ENCODE measurements at regions of chr1 and their contacts with region 1.

Region 1: DNA sequence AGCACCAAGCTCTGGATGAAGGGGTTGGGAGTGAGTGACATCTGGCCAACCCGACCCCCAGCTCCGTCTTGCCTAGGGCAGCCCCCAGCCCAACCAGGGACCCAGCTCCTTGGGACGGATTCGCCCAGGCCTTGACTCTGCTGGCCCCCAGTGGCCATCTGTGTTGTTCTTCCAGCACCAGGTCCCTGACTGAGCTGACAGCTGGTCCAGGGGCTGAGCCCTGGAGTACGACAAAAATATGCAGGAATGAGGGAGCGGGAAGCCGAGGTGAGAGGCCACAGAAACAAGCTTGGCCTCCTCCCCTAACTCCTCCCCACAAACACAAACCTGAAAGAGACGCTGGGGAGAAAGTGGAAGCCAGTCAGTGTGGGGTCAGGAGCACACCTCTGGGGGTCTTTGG is 55.0 kb upstream of the PAX7 start:
- DNase-seq: peak; percentile 94
- ATAC-seq: peak; percentile 95
- H3K4me3 Mint-ChIP-seq: no peak overlapping the region
- H3K27ac Mint-ChIP-seq: no peak overlapping the region
- H3K4me1 Mint-ChIP-seq: peaks cover 9% of the 10 kb centered on the region
- H3K27me3 Mint-ChIP-seq: peaks cover 2% of the 10 kb centered on the region; the same call in 1 of the 2 replicates
- CTCF ChIP-seq: peak; percentile 77

Region 2: DNA sequence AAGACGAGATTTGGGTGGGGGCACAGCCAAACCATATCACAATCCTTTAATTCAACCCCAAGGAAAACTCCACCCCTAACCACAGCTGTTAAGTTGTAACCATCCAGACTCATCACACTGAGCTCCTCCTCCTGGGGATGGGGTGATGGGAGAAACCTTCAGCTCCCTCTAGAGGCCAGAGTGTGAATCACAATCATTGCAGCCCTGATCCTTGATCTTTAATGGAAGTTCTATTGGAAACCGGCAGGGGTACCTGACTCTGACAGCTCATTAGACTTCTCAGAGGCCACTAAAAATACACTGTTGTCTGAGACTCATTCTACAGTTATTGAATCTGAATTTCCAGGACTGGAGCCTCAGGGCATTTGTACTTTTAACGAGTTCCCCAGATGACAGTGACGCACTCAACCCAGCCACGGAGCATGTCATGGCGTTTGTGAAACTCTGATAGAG is 340.8 kb before region 1 on chr1:
- CTCF ChIA-PET with region 1: interaction called, 20 read pairs
- POLR2A ChIA-PET with region 1: no interaction called
- DNase-seq: peak; percentile 77
- ATAC-seq: peak; percentile 82
- H3K4me3 Mint-ChIP-seq: no peak overlapping the region
- H3K27ac Mint-ChIP-seq: peak overlapping the region; percentile 86
- H3K4me1 Mint-ChIP-seq: peaks cover 78% of the 10 kb centered on the region
- H3K27me3 Mint-ChIP-seq: no peaks in the 10 kb centered on the region; the same call in 1 of the 2 replicates
- CTCF ChIP-seq: peak; percentile 73; the same call in 1 of the 2 replicates

Region 3: DNA sequence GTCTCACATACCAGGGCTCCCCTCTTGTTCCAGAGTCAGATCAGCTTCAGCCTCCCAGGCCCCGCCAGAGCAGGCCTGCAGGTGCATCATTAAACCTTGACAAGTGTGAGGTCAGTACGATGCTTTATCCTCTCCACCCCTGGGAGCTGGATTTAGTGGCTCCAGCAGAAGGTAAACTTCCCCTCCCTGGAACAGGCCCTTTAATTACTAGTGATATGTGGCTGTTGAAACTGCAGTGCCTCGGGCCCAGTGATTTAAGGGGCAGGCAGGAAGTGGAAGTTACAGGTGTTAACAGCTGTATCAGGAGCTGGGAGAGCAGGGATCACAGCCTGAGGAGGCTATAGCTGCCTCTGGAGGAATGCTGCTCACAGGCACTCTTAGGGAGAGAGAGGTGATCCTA is 227.3 kb before region 1 on chr1:
- CTCF ChIA-PET with region 1: interaction called, 14 read pairs
- POLR2A ChIA-PET with region 1: no interaction called
- DNase-seq: no peak
- ATAC-seq: peak; percentile 22
- H3K4me3 Mint-ChIP-seq: no peak overlapping the region
- H3K27ac Mint-ChIP-seq: no peak overlapping the region
- H3K4me1 Mint-ChIP-seq: peaks cover 45% of the 10 kb centered on the region
- H3K27me3 Mint-ChIP-seq: no peaks in the 10 kb centered on the region; the same call in 1 of the 2 replicates
- CTCF ChIP-seq: no peak

Region 4: DNA sequence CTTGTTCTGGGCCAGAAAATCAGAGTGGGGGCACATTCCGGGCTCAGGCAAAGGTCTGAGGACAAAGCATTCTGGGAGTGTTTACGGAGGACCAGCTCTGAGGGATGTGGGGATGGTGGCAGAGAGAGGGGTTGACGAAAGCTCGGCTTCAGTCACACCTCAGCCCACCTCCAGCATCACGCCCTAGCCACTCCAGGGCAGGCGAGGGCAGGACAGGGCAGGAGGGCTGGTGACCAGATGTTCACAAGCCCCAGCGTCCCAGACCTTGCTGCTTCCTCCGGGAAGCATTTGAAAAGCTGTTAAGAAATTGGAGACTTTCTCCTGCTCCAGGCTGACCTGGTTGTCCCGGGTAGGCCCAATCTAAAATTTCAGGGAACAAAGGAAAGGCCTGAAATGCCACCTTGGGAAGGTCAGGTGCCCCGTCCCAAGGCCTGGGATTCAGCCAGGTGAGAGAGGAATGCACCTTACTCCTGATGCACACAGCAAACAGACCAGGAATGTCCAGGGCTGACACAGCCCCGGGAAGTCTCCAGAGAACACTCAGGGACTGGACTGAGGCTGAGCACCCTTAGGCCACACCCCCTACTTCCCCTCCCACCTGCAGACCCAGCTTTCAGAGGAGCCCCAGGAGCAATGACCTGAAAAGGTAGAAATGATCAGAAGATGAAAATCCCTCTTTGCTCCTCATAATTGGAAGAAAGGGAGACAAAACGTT is 166.8 kb before region 1 on chr1:
- CTCF ChIA-PET with region 1: interaction called, 11 read pairs
- POLR2A ChIA-PET with region 1: no interaction called
- DNase-seq: no peak
- ATAC-seq: peak; percentile 38
- H3K4me3 Mint-ChIP-seq: no peak overlapping the region
- H3K27ac Mint-ChIP-seq: peak overlapping the region; percentile 94
- H3K4me1 Mint-ChIP-seq: peaks cover 75% of the 10 kb centered on the region
- H3K27me3 Mint-ChIP-seq: peaks cover 20% of the 10 kb centered on the region
- CTCF ChIP-seq: no peak

Region 5: DNA sequence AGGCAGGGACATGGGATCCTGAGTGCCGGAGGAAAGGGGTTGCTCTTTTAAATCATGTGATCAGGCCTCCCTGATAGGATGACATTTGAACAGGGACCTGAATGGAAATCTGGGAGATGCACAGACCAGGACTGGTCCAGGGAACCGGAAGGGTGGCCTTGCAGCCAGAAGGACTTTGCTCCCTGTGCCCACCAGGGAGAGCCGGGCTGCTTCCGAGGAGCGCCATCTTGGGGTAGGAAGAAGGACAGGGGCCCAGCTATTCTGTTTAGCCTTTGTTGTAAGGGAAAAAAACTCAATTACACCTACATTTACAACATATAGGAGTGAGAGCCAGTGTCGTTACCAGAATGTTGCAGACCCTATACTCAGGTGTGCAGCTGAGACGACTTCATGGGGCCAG is 89.4 kb before region 1 on chr1:
- CTCF ChIA-PET with region 1: interaction called, 25 read pairs
- POLR2A ChIA-PET with region 1: interaction called, 3 read pairs
- DNase-seq: peak; percentile 62
- ATAC-seq: peak; percentile 78
- H3K4me3 Mint-ChIP-seq: no peak overlapping the region
- H3K27ac Mint-ChIP-seq: no peak overlapping the region
- H3K4me1 Mint-ChIP-seq: peaks cover 35% of the 10 kb centered on the region
- H3K27me3 Mint-ChIP-seq: peaks cover 7% of the 10 kb centered on the region
- CTCF ChIP-seq: no peak

Region 6: GRCh38 chr1:18549906-18550305 is 25.7 kb before region 1 on chr1:
- CTCF ChIA-PET with region 1: interaction called, 340 read pairs
- POLR2A ChIA-PET with region 1: no interaction called
- DNase-seq: no peak
- ATAC-seq: no peak
- H3K4me3 Mint-ChIP-seq: no peak overlapping the region
- H3K27ac Mint-ChIP-seq: no peak overlapping the region
- H3K4me1 Mint-ChIP-seq: peaks cover 19% of the 10 kb centered on the region
- H3K27me3 Mint-ChIP-seq: peaks cover 32% of the 10 kb centered on the region
- CTCF ChIP-seq: no peak

Region 7: GRCh38 chr1:18676332-18676781 is 100.7 kb after region 1 on chr1:
- CTCF ChIA-PET with region 1: no interaction called
- POLR2A ChIA-PET with region 1: no interaction called
- DNase-seq: peak; percentile 45
- ATAC-seq: peak; percentile 43
- H3K4me3 Mint-ChIP-seq: peak overlapping the region; percentile 21; the same call in 1 of the 2 replicates
- H3K27ac Mint-ChIP-seq: no peak overlapping the region
- H3K4me1 Mint-ChIP-seq: peaks cover 44% of the 10 kb centered on the region
- H3K27me3 Mint-ChIP-seq: peaks cover 84% of the 10 kb centered on the region
- CTCF ChIP-seq: no peak